Heart left ventricle (tissue), 16 donors: ENCODE measurements at regions of chr7 and their contacts with region 1.

Region 1: GRCh38 chr7:121027761-121028669 is 39.5 kb downstream of the CPED1 start:
- DNase-seq: no peak
- ATAC-seq: peak; percentile 46 to 67 (median 55)
- H3K4me3 ChIP-seq: peak overlapping the region in 1 of 12 donors; percentile 14
- H3K27ac ChIP-seq: peak overlapping the region; percentile 26 to 84 (median 67)
- H3K4me1 ChIP-seq: peaks cover 3 to 75% (median 56%) of the 10 kb centered on the region in 12 donors
- H3K27me3 ChIP-seq: no peaks in the 10 kb centered on the region
- CTCF ChIP-seq: no peak
- POLR2A ChIP-seq: no peak

Region 2: GRCh38 chr7:120441850-120442249 is 586.2 kb before region 1 on chr7:
- intact Hi-C with region 1: no loop called
- DNase-seq: no peak
- ATAC-seq: no peak
- H3K4me3 ChIP-seq: no peak overlapping the region
- H3K27ac ChIP-seq: no peak overlapping the region
- H3K4me1 ChIP-seq: no peaks in the 10 kb centered on the region
- H3K27me3 ChIP-seq: no peaks in the 10 kb centered on the region
- CTCF ChIP-seq: no peak
- POLR2A ChIP-seq: no peak

Region 3: DNA sequence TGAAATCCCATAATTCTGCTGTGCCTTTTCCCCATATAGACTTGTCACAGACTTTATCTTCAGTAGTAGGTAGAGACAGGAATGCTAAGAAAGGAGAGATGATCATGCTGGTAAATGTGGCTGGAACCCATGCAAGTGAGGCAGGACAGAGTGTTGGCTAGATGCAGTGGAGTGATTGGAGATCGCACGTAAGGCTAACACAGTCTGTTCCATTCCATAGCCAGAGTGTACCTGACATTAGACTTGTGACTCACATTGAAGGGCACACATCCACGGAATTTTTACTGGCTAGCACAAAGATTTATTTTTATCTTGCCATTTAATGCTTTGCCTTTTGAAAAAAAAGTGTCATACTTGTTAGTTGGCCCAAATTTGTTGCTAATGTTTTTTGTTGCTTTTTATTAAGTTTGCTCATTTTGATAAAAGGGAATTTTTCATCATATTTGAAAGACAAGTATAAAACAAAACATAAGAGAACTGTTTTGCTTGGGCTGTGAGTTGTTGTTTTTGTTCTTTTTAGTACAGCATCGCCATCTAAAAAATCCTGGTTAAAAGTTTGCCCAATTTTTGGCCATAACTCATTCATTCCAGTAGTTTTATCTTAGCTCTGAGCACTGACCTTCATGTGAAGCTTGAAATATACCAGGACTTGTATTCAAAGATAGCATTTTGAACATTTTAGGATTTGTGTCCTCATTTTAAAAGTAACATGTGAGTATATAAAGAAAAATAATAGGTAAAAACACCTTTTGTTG is 41.5 kb after region 1 on chr7:
- intact Hi-C with region 1: loop called in 1 of 10 experiments (anchors 5 kb)
- DNase-seq: peak in 2 of 5 donors; percentile 21 to 45
- ATAC-seq: peak; percentile 98 to 99 (median 98)
- H3K4me3 ChIP-seq: peak overlapping the region in 3 of 12 donors; percentile 1 to 19 (median 8)
- H3K27ac ChIP-seq: peak overlapping the region; percentile 2 to 83 (median 62)
- H3K4me1 ChIP-seq: peaks cover 0 to 19% (median 4%) of the 10 kb centered on the region in 12 donors
- H3K27me3 ChIP-seq: no peaks in the 10 kb centered on the region
- CTCF ChIP-seq: no peak
- POLR2A ChIP-seq: no peak